Activated naive CD4-positive, alpha-beta T cell treated with anti-CD3 and anti-CD28 coated beads for 36 hours (primary cell): ENCODE measurements at regions of chr15 and their contacts with region 1.

Region 1: DNA sequence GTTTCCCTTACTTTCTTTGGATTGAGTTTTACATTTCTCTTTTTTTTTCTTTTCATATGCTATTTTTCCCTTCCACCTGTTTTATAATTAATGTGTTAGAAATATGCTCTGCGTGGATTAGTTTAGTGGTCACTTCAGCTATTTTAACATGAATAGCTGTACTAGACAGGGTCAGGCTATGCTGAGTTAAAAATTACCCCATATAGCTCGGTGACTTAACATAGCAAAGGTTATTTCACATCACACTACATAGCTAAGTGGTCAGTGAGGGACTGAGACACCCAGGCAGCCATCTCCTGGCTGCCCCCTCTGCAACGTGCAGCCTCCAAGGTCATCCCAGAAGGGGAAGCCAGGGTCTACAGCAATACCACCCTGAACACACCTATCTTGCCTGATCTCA is 46.9 kb upstream of the KIF23 start:
- DNase-seq: no peak
- H3K4me3 Mint-ChIP-seq: no peak overlapping the region
- H3K27ac Mint-ChIP-seq: no peak overlapping the region
- H3K4me1 Mint-ChIP-seq: no peaks in the 10 kb centered on the region
- H3K27me3 Mint-ChIP-seq: peaks cover 3% of the 10 kb centered on the region

Region 2: DNA sequence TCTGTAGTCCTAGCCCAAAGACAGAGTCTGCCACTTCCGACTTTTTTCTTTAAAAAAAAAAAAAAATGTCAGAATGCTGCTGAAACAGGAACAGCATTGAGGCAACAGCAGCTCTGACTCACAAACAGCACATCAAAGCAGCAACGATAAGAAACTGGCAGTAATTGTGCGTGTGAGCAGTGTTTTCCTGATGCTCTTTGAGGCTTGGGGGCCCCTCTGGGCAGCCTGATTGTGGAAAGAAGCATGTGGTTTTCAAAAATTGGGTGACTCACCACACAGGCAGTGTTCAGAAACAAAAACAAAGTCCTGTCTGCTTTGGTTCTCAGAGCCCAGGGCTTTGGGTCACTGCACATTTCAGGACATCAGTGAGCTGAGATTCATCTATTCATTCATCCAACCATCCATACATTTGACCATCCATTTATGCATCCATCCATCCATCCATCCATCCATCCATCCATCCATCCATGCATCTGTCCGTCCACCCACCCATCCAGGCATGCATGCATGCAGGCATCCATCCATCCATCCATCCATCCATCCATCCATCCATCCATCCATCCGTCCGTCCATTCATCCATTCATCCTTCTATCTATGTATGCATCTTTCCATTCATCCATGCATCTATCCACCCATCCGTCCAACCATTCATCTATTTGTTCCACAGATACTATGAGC is 393.8 kb after region 1 on chr15:
- CTCF ChIA-PET with region 1: no interaction called
- intact Hi-C with region 1: no loop called
- DNase-seq: peak; percentile 93
- H3K4me3 Mint-ChIP-seq: peak overlapping the region; percentile 20
- H3K27ac Mint-ChIP-seq: peak overlapping the region; percentile 97
- H3K4me1 Mint-ChIP-seq: peaks cover 74% of the 10 kb centered on the region
- H3K27me3 Mint-ChIP-seq: peaks cover 2% of the 10 kb centered on the region

Region 3: GRCh38 chr15:70226337-70226980 is 859.2 kb after region 1 on chr15:
- CTCF ChIA-PET with region 1: no interaction called
- intact Hi-C with region 1: loop called (anchors 5 kb)
- DNase-seq: no peak
- H3K4me3 Mint-ChIP-seq: no peak overlapping the region
- H3K27ac Mint-ChIP-seq: no peak overlapping the region
- H3K4me1 Mint-ChIP-seq: peaks cover 11% of the 10 kb centered on the region
- H3K27me3 Mint-ChIP-seq: peaks cover 2% of the 10 kb centered on the region